Calu3 (cell line): ENCODE measurements at regions of chr17 and their contacts with region 1.

Region 1: GRCh38 chr17:75877752-75878173 is 618 bp downstream of the TRIM47 start:
- DNase-seq: peak; percentile 84
- H3K4me3 Mint-ChIP-seq: peak overlapping the region; percentile 87
- H3K27ac Mint-ChIP-seq: peak overlapping the region; percentile 83
- H3K4me1 Mint-ChIP-seq: peaks cover 18% of the 10 kb centered on the region
- H3K27me3 Mint-ChIP-seq: no peaks in the 10 kb centered on the region
- CTCF ChIP-seq: no peak

Region 2: DNA sequence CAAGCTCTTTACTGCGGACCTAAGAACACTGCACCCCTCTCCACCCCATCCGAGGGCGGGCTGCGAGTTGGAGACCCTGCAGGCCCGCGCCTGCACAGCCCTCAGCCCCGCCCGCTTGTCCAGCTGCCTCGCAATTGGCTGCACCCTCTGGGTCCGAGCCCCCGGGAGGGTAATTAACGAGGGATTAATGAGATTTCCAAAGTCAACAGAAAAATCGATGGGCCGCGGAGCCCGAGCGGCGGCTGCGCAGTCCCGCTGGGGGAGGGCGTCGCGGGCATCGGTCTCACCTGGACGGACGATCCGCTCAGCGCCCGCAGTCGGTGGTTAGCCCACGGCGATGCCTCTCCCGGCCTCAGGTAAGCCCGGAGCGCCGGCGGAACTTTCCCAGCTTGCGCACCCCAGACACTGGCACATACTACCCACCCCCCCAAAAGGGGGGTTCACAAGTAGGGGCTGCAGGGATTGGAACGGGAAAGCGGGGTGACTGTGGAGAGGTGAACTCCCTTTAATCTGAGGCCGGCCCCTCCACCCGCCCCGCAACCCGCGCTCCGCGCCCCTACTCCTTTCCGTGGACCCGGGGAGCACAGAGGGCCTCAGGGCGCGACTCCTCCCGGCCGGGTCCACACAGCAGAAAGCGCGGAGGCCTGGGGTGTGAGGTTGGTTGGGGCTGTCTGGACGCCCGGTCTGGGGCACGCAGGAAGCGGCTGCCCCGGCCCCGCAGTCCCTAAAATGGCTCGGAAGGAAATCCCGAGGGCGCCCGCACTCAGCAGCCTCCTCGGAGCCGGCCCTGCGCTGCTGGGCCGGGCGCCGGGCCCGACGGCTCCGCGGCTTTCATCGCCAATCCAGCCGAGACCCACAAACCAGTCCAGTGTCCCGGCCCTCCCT is 941.9 kb before region 1 on chr17 and contains the start of gene OTOP3:
- CTCF ChIA-PET with region 1: no interaction called
- intact Hi-C with region 1: no loop called
- DNase-seq: peak; percentile 28
- H3K4me3 Mint-ChIP-seq: peak within 1 kb of the TSS; percentile 14
- H3K27ac Mint-ChIP-seq: no peak within 1 kb of the TSS
- H3K4me1 Mint-ChIP-seq: no peaks in the 10 kb centered on the region
- H3K27me3 Mint-ChIP-seq: peaks cover 93% of the 10 kb centered on the region
- CTCF ChIP-seq: no peak
- total RNA-seq, gene OTOP3: not detected in 2 replicates

Region 3: DNA sequence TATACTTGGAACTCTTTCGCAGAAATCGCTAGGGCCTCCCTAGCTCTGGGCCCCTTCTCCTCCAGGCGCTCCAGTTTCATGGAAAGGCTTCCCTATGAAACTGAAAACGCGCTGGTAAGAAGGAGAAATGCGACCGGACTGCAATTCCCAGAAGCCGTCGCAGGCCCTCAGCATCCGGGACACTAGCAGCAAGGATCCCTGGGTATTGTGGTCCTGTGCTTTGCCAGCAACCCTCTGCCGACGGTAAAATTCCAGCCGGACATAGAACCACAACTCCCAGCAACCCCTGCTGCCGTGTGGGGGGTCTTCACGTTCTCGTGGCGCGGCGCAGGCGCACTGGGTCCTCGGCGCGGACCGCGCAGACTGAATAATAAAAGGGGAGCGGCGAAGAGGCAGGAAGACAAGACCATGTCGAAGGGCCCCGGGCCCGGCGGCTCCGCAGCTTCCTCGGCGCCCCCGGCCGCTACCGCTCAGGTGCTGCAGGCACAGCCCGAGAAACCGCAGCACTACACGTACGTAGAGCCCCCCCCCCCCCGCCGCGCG is 93.2 kb before region 1 on chr17 and contains the start of gene UNK:
- CTCF ChIA-PET with region 1: interaction called, 6 read pairs
- intact Hi-C with region 1: loop called (anchors 5 kb)
- DNase-seq: peak; percentile 96
- H3K4me3 Mint-ChIP-seq: peak within 1 kb of the TSS; percentile 84
- H3K27ac Mint-ChIP-seq: peak within 1 kb of the TSS; percentile 96
- H3K4me1 Mint-ChIP-seq: peaks cover 28% of the 10 kb centered on the region
- H3K27me3 Mint-ChIP-seq: peaks cover 7% of the 10 kb centered on the region
- CTCF ChIP-seq: no peak
- total RNA-seq, gene UNK: 26.0 and 29.7 TPM in 2 replicates

Region 4: DNA sequence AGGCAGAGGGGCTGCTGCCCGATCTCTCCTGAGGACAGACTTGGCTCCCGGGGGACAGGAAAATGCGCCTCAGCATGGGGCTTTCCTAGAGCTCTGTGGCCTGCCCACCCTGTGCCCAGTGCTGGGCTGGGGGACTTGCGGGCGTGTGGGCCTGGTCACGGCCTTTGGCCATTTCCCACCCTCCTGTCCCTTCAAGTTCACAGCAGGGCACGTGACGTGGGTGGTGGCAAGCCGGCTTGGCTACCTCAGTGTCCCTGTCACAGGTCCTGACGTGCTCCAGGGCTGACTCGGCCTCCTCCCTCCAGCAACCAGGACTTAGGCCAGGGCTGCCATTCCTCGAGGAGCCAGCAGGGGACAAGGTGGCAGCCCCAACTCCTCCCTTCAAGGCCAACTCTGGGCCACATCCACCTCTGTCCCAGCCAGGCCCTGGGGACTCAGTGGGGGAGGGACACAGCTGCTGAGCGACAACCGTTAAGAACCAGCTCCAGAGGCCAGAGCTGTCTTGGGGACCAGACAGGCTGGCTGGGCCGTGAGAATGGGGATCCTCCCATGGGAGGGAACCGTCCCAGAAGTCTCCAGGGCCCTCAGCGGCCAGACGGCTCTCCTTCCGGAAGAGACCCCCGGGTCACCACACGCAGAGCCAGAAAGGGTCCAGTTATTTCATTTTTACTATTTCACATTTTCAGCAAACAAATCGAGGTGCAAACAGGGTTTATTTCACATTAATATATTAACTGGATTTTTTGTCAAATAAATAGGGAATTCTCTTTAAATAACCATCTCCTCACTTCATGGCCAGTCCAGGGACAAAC is 32.5 kb before region 1 on chr17:
- CTCF ChIA-PET with region 1: interaction called, 22 read pairs
- intact Hi-C with region 1: no loop called
- DNase-seq: peak; percentile 96
- H3K4me3 Mint-ChIP-seq: peak overlapping the region; percentile 68
- H3K27ac Mint-ChIP-seq: peak overlapping the region; percentile 94
- H3K4me1 Mint-ChIP-seq: peaks cover 18% of the 10 kb centered on the region
- H3K27me3 Mint-ChIP-seq: no peaks in the 10 kb centered on the region
- CTCF ChIP-seq: peak; percentile 90

Region 5: GRCh38 chr17:75855310-75856081 is 22.3 kb before region 1 on chr17 and contains the start of gene WBP2:
- CTCF ChIA-PET with region 1: interaction called, 23 read pairs
- intact Hi-C with region 1: no loop called
- DNase-seq: peak; percentile 95
- H3K4me3 Mint-ChIP-seq: no peak within 1 kb of the TSS
- H3K27ac Mint-ChIP-seq: no peak within 1 kb of the TSS
- H3K4me1 Mint-ChIP-seq: peaks cover 8% of the 10 kb centered on the region
- H3K27me3 Mint-ChIP-seq: no peaks in the 10 kb centered on the region
- CTCF ChIP-seq: no peak
- total RNA-seq, gene WBP2: 126 and 133 TPM in 2 replicates

Region 6: DNA sequence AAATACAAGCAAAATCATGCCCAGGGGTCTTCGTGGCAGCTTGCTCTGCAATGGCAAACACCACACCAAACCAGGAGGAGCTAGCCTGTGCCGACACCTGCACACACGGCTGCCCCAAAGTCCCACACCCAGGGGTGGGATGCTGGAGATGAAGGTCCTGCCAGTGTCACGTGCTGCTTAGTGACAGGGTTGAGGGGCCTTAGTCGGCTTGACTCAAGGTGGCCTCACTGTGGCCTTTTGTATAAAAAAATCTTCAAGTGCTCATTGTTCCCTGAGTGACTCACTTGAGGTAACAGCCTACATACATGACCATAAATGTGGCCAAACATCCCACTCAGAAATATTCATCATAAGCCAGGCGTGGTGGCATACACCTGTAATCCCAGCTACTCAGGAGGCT is 11.7 kb after region 1 on chr17:
- CTCF ChIA-PET with region 1: interaction called, 10 read pairs
- intact Hi-C with region 1: no loop called
- DNase-seq: no peak
- H3K4me3 Mint-ChIP-seq: no peak overlapping the region
- H3K27ac Mint-ChIP-seq: no peak overlapping the region
- H3K4me1 Mint-ChIP-seq: no peaks in the 10 kb centered on the region
- H3K27me3 Mint-ChIP-seq: no peaks in the 10 kb centered on the region
- CTCF ChIP-seq: no peak

Region 7: GRCh38 chr17:76014925-76015261 is 137.1 kb after region 1 on chr17:
- CTCF ChIA-PET with region 1: no interaction called
- intact Hi-C with region 1: no loop called
- DNase-seq: no peak
- H3K4me3 Mint-ChIP-seq: no peak overlapping the region
- H3K27ac Mint-ChIP-seq: no peak overlapping the region
- H3K4me1 Mint-ChIP-seq: no peaks in the 10 kb centered on the region
- H3K27me3 Mint-ChIP-seq: no peaks in the 10 kb centered on the region
- CTCF ChIP-seq: no peak

Region 8: DNA sequence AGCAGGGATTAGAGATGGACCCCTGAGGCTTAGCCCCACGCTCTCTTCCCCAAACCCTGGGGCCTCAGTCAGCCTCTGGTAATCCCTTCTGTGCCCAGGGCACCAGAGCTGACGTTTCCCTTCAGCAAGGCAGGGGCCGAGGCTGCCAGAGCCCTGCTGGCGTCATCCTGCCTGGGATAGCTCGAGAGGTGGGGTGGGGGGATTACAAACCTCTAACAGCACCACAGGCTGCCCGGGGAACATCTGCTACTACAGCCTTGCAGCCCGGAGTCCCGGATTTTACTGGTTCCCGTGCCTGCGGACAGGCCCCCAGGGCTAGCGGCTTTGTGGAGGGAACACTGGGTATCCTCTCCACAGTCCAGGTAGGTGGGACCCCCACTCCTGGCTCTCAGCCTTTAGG is 589.6 kb after region 1 on chr17 and contains the start of gene AANAT:
- CTCF ChIA-PET with region 1: no interaction called
- intact Hi-C with region 1: no loop called
- DNase-seq: no peak
- H3K4me3 Mint-ChIP-seq: no peak within 1 kb of the TSS
- H3K27ac Mint-ChIP-seq: no peak within 1 kb of the TSS
- H3K4me1 Mint-ChIP-seq: no peaks in the 10 kb centered on the region
- H3K27me3 Mint-ChIP-seq: no peaks in the 10 kb centered on the region
- CTCF ChIP-seq: no peak
- total RNA-seq, gene AANAT: not detected in 2 replicates